Activated CD4-positive, alpha-beta memory T cell treated with anti-CD3 and anti-CD28 coated beads for 36 hours (primary cell): ENCODE measurements at regions of chr11 and their contacts with region 1.

Region 1: DNA sequence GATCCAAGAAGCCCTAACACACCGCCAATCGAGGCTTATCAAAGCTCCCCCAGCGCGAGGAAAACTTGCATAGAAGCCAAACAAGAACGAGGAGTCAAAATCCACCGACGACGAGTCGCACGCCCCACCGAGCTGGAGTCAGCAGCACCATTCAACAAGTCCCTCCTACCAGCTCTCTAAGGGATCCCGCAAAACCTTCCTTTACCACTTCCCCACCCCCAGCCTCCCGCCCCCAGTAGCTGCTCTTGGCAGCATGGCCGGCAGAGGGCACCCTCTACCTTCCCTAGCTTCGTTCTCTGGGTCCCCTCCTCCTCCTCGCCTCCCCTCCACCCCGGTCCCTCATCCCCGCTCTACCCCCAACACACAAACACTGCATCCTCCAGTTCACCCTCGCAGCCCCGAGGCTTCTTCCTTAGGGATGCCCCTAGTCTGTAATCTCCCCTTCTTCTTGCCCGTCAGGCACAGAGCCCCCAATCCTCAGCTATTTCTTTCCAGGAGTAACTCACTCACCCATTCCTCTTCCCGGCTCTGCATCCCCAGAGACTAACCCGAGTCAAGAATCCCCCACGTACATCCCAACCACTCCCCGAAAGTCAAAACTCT is 1.3 kb downstream of the BDNF start:
- DNase-seq: peak; percentile 84
- H3K4me3 Mint-ChIP-seq: no peak overlapping the region
- H3K27ac Mint-ChIP-seq: no peak overlapping the region
- H3K4me1 Mint-ChIP-seq: peaks cover 27% of the 10 kb centered on the region
- H3K27me3 Mint-ChIP-seq: peaks cover 65% of the 10 kb centered on the region

Region 2: DNA sequence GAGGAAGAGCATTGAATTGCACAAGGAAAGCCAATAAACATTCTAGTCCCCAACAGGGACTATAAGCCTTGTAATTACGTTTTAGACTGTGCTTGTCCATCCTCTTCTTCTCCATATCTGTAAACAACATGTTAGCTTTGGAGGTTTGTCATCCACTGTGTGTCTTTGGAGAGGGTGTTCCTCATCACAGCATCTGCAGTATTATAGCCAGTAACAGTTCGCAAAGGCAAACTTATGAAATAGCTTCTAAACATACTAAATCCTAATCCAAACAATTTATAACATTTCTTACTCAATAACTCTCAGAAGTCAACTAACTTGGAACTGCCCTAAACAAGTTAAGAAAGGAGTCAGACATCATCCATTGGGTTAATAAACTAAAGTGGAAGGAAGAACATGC is 11.6 kb after region 1 on chr11:
- CTCF ChIA-PET with region 1: interaction called, 13 read pairs
- POLR2A ChIA-PET with region 1: no interaction called
- intact Hi-C with region 1: no loop called
- DNase-seq: no peak
- H3K4me3 Mint-ChIP-seq: no peak overlapping the region
- H3K27ac Mint-ChIP-seq: no peak overlapping the region
- H3K4me1 Mint-ChIP-seq: no peaks in the 10 kb centered on the region
- H3K27me3 Mint-ChIP-seq: peaks cover 8% of the 10 kb centered on the region

Region 3: DNA sequence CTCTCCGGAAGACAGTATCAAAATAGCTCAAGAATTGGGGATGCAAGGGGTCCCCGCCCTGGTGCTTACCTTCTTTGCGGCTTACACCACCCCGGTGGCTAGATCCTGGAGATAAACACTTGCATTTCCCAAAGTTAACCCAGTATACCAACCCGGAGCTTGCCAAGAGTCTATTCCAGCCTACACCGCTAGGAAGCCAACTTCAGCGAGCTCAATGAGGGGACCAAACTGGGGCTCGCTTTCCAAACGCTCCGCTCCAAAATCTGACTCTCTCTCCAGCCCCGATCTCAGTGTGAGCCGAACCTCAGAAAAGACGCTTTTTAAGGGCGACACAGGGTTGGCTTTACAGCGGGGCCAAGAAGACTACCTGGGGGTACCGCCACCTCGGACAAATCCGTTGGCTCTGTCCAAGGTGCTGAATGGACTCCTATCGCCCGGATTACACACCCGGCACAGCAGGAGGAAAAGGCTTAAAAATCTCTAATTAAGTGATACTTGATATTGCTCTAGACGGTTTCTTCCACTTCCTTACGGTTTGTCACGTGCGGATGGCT is 21.4 kb after region 1 on chr11:
- CTCF ChIA-PET with region 1: interaction called, 11 read pairs
- POLR2A ChIA-PET with region 1: no interaction called
- intact Hi-C with region 1: no loop called
- DNase-seq: peak; percentile 24
- H3K4me3 Mint-ChIP-seq: no peak overlapping the region
- H3K27ac Mint-ChIP-seq: no peak overlapping the region
- H3K4me1 Mint-ChIP-seq: peaks cover 13% of the 10 kb centered on the region
- H3K27me3 Mint-ChIP-seq: peaks cover 62% of the 10 kb centered on the region

Region 4: GRCh38 chr11:28529540-28530410 is 830.8 kb after region 1 on chr11:
- CTCF ChIA-PET with region 1: interaction called, 42 read pairs
- POLR2A ChIA-PET with region 1: no interaction called
- intact Hi-C with region 1: loop called (anchors 1 kb)
- DNase-seq: no peak
- H3K4me3 Mint-ChIP-seq: no peak overlapping the region
- H3K27ac Mint-ChIP-seq: no peak overlapping the region
- H3K4me1 Mint-ChIP-seq: no peaks in the 10 kb centered on the region
- H3K27me3 Mint-ChIP-seq: no peaks in the 10 kb centered on the region

Region 5: DNA sequence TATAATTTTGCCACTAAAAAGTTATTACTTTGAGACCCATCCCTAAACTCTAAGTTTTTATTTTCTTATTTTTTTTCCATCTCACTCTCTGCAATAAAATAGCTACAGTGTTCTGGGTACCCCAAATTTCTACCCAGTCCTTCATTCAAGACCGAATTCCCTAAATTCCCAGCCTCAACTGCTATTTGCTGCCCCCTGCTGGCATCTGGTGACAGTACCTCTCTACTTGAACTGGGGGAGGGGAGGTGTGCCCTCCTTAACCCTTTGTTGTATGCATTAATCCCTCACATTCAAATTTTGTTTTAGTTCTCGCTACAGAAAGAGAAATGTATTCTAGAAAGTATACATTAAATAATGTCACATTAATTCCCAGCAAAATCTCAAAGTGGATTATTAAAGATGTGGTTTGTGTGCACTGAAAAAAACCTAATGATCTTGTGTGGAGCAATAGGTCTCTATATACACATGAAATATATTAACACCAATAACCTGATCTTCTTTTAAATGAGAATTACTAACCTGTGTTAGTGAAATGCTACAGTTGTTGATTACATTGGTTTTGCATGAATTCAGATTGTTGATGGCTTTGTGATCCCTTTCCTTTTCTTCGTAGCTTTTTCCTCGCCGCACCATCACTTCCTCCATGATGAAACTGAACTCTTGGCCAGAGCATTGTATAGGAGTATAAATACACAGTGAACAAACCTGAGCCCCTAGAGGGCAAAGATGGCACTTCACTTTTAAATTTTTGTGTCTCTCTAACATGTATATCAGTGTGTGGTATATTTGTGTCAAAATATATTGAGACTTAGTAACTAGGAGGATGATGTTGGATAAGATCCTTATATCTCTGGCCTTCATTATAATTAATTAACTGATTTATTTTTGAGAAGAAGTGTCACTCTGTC is 999.2 kb after region 1 on chr11:
- CTCF ChIA-PET with region 1: no interaction called
- POLR2A ChIA-PET with region 1: no interaction called
- intact Hi-C with region 1: loop called (anchors 2 kb)
- DNase-seq: peak; percentile 38
- H3K4me3 Mint-ChIP-seq: no peak overlapping the region
- H3K27ac Mint-ChIP-seq: no peak overlapping the region
- H3K4me1 Mint-ChIP-seq: no peaks in the 10 kb centered on the region
- H3K27me3 Mint-ChIP-seq: no peaks in the 10 kb centered on the region

Region 6: GRCh38 chr11:29159552-29160465 is 1460.8 kb after region 1 on chr11:
- CTCF ChIA-PET with region 1: no interaction called
- POLR2A ChIA-PET with region 1: no interaction called
- intact Hi-C with region 1: loop called (anchors 2 kb)
- DNase-seq: no peak
- H3K4me3 Mint-ChIP-seq: no peak overlapping the region
- H3K27ac Mint-ChIP-seq: no peak overlapping the region
- H3K4me1 Mint-ChIP-seq: no peaks in the 10 kb centered on the region
- H3K27me3 Mint-ChIP-seq: no peaks in the 10 kb centered on the region

Region 7: DNA sequence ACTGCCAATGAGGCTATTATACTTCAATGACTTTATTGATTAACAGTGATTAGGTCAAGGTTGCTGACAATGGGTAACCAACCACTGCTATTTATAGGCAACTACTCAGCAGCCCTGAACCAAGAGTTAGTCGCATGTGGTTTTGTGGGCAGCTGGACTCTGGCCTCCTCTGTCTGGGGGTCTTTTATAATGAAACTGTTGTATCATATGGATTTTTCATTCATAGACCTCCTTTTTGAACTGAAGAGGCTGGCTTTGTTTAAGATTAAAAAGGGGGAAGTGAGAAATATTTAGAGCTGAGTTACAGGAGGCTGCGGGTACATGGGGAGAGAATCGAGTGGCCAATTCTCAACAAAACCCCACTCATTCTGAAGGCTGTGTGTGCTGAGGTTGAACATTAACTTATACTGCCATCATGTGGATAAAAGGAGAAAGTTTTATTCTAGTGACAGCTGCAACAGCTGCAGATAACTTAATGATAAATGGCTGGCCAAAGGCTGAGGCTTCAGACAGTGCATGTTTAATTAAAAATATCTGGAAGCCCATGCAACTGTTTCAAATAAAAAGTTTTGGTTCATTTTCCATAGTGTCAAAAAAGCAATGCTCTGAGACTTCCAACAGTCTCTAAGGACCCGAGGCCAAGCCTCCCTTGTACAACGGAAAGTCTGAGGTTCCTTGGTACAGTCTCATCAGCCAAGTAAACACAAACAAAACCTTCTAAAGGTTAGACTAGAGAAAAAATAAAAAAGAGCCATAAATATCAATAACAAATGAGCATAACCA is 1635.2 kb after region 1 on chr11:
- CTCF ChIA-PET with region 1: no interaction called
- POLR2A ChIA-PET with region 1: no interaction called
- intact Hi-C with region 1: loop called (anchors 10 kb)
- DNase-seq: no peak
- H3K4me3 Mint-ChIP-seq: no peak overlapping the region
- H3K27ac Mint-ChIP-seq: no peak overlapping the region
- H3K4me1 Mint-ChIP-seq: no peaks in the 10 kb centered on the region
- H3K27me3 Mint-ChIP-seq: no peaks in the 10 kb centered on the region